ENCODE measurements at regions of chr20 and their contacts with region 1.

Region 1: GRCh38 chr20:50790651-50791277 is 4.1 kb upstream of the BCAS4 start:
- DNase-seq: peak; percentile 94
- H3K4me3 ChIP-seq: no peak overlapping the region; a peak in 1 of 4 replicates
- H3K27ac ChIP-seq: peak overlapping the region; percentile 73 to 80
- H3K4me1 ChIP-seq: peaks cover 12 to 21% of the 10 kb centered on the region in 2 experiments
- H3K27me3 ChIP-seq: no peaks in the 10 kb centered on the region
- CTCF ChIP-seq: peak; percentile 74
- EP300 ChIP-seq: peak; percentile 30 to 36; a peak in 2 of 4 replicates
- RAD21 ChIP-seq: peak; percentile 40

Region 2: GRCh38 chr20:50804418-50805064 is 13.8 kb after region 1 on chr20:
- CTCF ChIA-PET with region 1: interaction called, 10 read pairs
- POLR2A ChIA-PET with region 1: no interaction called
- DNase-seq: no peak
- H3K4me3 ChIP-seq: no peak overlapping the region
- H3K27ac ChIP-seq: no peak overlapping the region
- H3K4me1 ChIP-seq: no peaks in the 10 kb centered on the region
- H3K27me3 ChIP-seq: no peaks in the 10 kb centered on the region
- CTCF ChIP-seq: no peak
- EP300 ChIP-seq: no peak
- RAD21 ChIP-seq: no peak

Region 3: DNA sequence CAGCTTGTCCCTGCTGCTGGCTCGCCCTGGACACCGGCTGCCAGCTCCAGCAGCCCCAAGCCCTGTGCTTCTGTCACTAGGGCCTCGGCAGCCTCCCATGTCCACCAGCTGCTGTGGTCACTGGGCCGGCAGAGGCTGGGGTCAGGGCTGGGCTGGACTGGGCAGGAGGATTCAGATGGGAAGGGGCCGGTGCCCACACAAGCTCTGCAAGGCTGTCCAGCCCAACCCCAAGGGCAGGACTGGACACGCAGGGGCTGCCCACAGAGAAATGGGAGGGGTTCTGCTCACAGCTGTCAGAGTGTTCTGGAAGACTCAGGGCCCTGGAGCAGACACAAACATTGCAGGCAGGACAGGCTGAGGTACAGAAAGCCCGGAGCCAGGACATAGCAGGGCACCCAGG is 74.8 kb after region 1 on chr20:
- CTCF ChIA-PET with region 1: interaction called, 13 read pairs
- POLR2A ChIA-PET with region 1: no interaction called
- DNase-seq: no peak
- H3K4me3 ChIP-seq: no peak overlapping the region
- H3K27ac ChIP-seq: no peak overlapping the region
- H3K4me1 ChIP-seq: peaks cover 0 to 11% of the 10 kb centered on the region in 2 experiments; a peak in 1 of 4 replicates
- H3K27me3 ChIP-seq: no peaks in the 10 kb centered on the region
- CTCF ChIP-seq: no peak
- EP300 ChIP-seq: no peak
- RAD21 ChIP-seq: no peak

Region 4: DNA sequence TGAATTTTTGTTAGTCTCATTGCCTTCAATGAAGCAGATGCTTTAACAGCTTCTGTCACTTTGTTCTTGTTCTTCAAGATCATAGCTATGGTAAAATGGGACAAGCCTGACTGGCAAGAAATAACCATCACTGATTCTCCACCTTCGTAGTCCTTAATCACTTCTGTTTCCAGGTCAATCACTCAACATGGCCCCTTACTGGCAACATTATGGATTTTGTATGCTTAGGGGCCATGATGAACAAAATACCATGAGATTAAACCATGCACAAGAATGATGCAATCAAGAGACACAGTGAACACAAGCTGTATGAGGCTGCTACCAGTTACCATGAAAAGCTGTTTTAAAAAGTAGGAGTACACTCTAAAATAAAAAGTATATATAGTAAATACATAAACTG is 107.7 kb after region 1 on chr20:
- CTCF ChIA-PET with region 1: interaction called, 12 read pairs
- POLR2A ChIA-PET with region 1: no interaction called
- DNase-seq: no peak
- H3K4me3 ChIP-seq: no peak overlapping the region
- H3K27ac ChIP-seq: no peak overlapping the region
- H3K4me1 ChIP-seq: no peaks in the 10 kb centered on the region; a peak in 1 of 4 replicates
- H3K27me3 ChIP-seq: no peaks in the 10 kb centered on the region
- CTCF ChIP-seq: no peak
- EP300 ChIP-seq: no peak
- RAD21 ChIP-seq: no peak

Region 5: DNA sequence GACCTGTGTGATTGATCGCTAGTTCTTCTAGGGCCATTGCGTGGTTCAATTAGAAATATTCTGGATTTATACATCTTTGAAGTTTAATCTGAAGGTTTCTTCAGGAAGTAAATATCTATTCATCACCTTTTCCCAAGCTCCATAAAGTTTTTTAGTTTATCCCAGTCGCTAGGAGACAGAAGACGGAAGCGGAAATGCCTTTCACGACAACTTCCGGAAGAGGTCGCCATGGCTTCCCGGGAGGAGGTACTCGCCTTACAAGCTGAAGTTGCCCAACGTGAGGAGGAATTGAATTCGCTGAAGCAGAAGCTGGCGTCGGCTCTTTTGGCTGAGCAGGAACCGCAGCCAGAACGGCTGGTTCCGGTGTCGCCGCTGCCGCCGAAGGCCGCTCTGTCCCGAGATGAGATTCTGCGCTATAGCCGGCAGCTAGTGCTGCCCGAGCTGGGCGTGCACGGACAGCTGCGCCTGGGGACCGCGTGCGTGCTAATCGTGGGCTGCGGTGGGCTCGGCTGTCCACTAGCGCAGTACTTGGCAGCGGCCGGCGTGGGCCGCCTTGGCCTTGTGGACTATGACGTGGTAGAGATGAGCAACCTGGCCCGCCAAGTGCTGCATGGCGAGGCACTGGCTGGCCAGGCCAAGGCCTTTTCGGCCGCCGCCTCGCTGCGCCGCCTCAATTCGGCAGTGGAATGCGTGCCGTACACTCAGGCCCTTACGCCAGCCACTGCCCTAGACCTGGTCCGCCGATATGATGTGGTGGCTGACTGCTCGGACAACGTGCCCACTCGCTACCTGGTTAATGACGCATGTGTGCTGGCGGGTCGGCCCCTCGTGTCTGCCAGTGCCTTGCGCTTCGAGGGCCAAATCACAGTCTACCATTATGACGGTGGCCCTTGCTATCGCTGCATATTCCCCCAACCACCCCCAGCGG is 168.1 kb after region 1 on chr20 and contains the start of gene MOCS3:
- CTCF ChIA-PET with region 1: interaction called, 29 read pairs
- POLR2A ChIA-PET with region 1: interaction called, 12 read pairs
- DNase-seq: peak; percentile 86
- H3K4me3 ChIP-seq: peak within 1 kb of the TSS; percentile 98 to 100
- H3K27ac ChIP-seq: peak within 1 kb of the TSS; percentile 91 to 96
- H3K4me1 ChIP-seq: peaks cover 18 to 22% of the 10 kb centered on the region in 2 experiments
- H3K27me3 ChIP-seq: no peaks in the 10 kb centered on the region
- CTCF ChIP-seq: no peak
- EP300 ChIP-seq: 0 out of 4 replicates have a peak, but pooled peaks of 1 of the 2 experiments have one; percentile 32
- RAD21 ChIP-seq: no peak
- polyA plus RNA-seq, gene MOCS3: 4.0 and 4.4 TPM in 2 replicates